ENCODE measurements at regions of chr19 and their contacts with region 1.

Region 1: DNA sequence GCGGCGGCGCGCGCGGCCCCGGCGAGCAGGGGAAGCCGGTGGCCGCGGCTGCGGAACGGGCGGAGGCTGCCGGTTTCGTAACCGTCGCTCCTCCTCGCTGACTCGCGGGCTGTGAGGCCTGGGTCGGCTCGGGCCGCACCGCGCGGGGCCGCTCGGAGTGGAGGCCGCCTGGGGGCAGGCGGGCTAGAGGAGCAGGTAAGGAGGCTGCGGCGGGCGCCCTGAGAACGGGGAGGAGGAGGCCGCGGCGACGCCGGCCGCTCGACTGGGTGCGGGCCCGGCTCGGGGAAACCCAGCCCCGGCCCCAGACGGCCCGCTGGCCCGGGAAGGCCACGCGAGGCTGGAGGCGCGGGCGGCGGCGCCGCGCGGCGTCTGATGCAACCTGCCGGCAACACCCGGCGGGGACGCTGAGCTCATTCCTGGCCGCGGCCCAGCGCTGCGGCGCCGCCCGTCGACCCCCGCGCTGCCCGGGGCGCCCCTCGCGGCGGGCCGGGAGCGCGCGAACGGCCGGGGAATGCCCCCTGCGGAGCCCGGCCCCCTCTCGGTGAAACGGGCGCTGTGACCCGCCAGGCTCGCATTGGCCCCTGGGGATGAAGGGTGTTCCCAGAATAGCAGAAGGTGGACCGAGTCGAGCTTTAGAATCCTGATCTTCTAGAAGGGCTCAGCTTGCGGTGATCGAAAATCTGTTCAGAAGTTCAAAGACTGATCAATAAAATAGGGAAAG is at the start of gene CEBPG:
- DNase-seq: peak; percentile 65 to 87
- ATAC-seq: peak; percentile 29
- H3K4me3 ChIP-seq: peak within 1 kb of the TSS; percentile 65 to 87
- H3K27ac ChIP-seq: peak within 1 kb of the TSS; percentile 62 to 83
- H3K4me1 ChIP-seq: peaks cover 0 to 7% of the 10 kb centered on the region in 2 donors
- H3K27me3 ChIP-seq: no peaks in the 10 kb centered on the region
- total RNA-seq, gene CEBPG: 21.8 to 30.5 TPM

Region 2: DNA sequence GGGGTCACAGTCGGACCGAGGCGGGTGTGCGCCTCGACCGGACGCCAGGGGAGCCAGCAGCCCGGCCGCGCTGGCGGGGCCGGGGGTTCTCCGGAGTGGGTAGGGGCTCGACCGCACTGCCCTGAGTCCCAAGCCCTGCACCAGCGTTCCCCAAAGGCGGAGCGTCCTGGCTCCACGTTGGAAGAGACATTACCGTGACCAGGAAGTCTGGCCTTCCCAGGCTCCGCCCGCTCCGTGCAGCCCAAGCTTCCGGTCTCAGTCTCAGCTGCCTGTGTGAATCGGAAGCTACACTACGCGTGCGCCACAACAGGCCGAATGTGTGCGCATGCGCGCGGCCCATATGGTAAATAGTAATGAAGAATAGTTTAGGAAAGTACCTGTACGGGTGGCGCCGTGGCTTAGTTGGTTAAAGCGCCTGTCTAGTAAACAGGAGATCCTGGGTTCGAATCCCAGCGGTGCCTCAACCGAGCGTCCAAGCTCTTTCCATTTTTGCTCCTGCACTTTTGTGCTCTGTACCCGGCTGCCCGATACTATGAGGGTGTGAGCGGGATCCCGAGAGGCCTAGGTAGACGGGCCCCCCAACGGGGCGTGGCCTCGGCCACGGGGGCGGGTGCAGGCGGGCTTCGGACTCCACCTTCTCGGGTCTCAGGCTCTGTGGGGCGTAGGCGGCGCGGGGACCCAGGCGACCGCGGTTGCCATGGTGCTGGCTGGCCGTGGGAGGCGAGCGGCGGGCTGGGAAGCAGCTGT is 197.0 kb before region 1 on chr19:
- intact Hi-C with region 1: loop called in 1 of 2 experiments (anchors 5 kb)
- DNase-seq: peak; percentile 97 to 98
- ATAC-seq: peak; percentile 97
- H3K4me3 ChIP-seq: peak overlapping the region; percentile 59 to 79
- H3K27ac ChIP-seq: peak overlapping the region; percentile 67 to 86
- H3K4me1 ChIP-seq: no peaks in the 10 kb centered on the region
- H3K27me3 ChIP-seq: no peaks in the 10 kb centered on the region

Region 3: GRCh38 chr19:33302175-33302973 is 71.5 kb before region 1 on chr19 and contains the start of gene CEBPA:
- intact Hi-C with region 1: loop called (anchors 1 to 5 kb)
- DNase-seq: peak; percentile 89 to 92
- ATAC-seq: peak; percentile 90
- H3K4me3 ChIP-seq: peak within 1 kb of the TSS; percentile 30 to 80
- H3K27ac ChIP-seq: no peak within 1 kb of the TSS
- H3K4me1 ChIP-seq: no peaks in the 10 kb centered on the region
- H3K27me3 ChIP-seq: no peaks in the 10 kb centered on the region
- total RNA-seq, gene CEBPA: 6.1 to 10.3 TPM

Measured in aorta (tissue), 5 donors.